ENCODE measurements at regions of chr21 and their contacts with region 1.

Region 1: DNA sequence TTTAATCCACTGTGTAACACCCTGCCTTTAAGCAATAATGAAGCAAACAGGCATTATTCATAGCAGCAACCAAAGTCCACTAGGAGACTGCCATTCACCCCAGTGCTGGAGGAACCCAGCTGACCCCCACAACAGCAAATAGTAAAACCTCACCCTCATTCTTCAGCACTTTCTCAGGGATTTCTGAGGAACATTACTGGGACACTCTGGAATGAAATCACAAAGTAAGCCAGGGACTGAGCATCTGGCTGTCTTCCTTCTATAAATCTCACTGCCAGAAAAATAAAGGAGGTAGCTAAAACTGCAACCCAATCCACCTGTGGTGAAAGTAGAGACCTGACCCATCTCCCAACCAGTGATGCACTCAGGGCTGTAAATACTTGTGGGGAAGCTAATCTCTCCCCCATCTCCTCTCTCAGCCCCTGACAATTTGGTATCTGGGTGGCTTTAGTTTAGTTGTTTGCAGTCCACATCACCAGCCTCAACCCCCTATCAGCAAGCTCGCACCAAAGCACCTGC is 47.1 kb downstream of the COL6A1 start:
- DNase-seq: peak; percentile 56
- H3K4me3 ChIP-seq: no peak overlapping the region
- H3K27ac ChIP-seq: peak overlapping the region; percentile 87
- H3K27me3 ChIP-seq: no peaks in the 10 kb centered on the region
- CTCF ChIP-seq: no peak

Region 2: DNA sequence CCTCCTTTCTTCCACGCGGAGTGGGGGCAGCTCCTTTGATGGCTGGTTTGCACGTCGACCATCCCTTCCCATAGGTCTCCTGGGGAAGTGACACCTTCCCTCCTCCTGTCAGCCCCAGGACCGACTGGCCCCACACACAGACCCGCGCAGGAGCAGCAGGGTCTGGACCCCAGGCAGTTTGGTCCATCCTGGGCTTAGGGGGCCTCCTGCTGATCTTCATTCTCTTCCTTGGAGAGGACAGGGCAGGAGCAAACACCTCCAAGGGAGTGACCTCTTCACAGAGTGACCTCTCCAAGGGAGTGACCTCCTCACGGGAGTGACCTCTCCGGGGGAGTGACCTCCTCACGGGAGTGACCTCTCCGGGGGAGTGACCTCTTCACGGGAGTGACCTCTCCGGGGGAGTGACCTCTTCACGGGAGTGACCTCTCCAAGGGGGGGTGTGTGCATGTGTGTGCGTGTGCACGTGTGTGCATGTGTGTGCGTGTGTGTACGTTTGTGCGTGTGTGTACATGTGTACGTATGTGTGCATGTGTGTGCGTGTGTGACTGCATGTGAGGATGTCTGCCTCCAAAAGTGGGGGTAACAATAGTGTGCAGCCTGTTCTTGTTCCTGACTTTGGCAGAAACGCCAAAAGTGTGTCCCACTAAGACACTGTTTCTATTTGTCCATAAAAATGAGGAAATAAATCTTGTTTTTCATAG is 17.2 kb before region 1 on chr21:
- CTCF ChIA-PET with region 1: no interaction called
- POLR2A ChIA-PET with region 1: no interaction called
- DNase-seq: no peak
- H3K4me3 ChIP-seq: no peak overlapping the region
- H3K27ac ChIP-seq: no peak overlapping the region
- H3K27me3 ChIP-seq: no peaks in the 10 kb centered on the region
- CTCF ChIP-seq: no peak

Region 3: GRCh38 chr21:46038871-46039397 is 10.3 kb after region 1 on chr21:
- CTCF ChIA-PET with region 1: interaction called, 3 read pairs
- POLR2A ChIA-PET with region 1: interaction called, 10 read pairs
- DNase-seq: no peak
- H3K4me3 ChIP-seq: no peak overlapping the region
- H3K27ac ChIP-seq: peak overlapping the region; percentile 52
- H3K27me3 ChIP-seq: no peaks in the 10 kb centered on the region
- CTCF ChIP-seq: no peak

Region 4: DNA sequence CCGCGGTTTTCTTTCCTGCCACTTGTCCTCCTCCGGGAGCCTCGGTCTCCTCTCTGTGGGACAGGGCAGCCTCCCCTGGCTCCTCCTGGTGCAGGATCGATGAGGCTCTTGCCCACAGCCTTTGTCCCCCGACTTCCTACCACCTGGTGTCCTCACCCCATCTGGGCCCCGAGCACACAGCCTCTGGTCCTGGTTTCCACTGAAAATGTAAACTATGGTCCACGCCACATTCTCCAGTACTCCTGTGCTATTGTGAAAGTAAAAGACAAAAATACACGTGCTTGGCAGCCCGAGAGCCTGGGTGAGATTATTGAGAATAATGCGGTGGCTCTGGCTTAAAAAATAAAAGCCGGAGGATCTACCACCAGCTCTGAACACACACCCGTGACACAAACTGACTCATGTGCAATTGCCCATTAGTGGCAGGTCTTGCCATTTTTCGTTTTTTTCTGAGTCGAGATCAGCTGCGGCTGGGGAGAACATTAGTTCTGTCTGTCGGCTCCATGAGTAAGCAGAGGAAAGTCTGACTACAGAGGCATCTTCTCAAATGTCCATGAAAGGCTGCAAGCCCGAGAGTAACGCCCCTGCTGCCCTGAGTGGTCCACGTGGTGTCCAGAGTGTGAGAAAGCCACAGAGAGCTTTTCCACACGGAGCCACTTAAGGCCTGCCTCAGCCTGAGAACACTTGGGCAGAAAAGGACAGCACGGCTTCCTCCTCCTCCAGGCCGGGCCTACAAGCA is 63.6 kb after region 1 on chr21:
- CTCF ChIA-PET with region 1: no interaction called
- POLR2A ChIA-PET with region 1: interaction called, 13 read pairs
- DNase-seq: peak; percentile 96
- H3K4me3 ChIP-seq: peak overlapping the region; percentile 54
- H3K27ac ChIP-seq: peak overlapping the region; percentile 100
- H3K27me3 ChIP-seq: no peaks in the 10 kb centered on the region
- CTCF ChIP-seq: no peak